ENCODE measurements at regions of chr3 and their contacts with region 1.

Region 1: GRCh38 chr3:188974856-188975599 is 196.7 kb upstream of the TPRG1 start:
- DNase-seq: peak in 4 of 5 donors; percentile 1 to 77 (median 38)
- H3K4me3 ChIP-seq: no peak overlapping the region
- H3K4me3 Mint-ChIP-seq: peak overlapping the region; percentile 1 to 86 (median 67)
- H3K27ac ChIP-seq: peak overlapping the region; percentile 51
- H3K27ac Mint-ChIP-seq: peak overlapping the region; percentile 30 to 96 (median 90)
- H3K4me1 ChIP-seq: peaks cover 8% of the 10 kb centered on the region
- H3K4me1 Mint-ChIP-seq: peaks cover 22 to 45% (median 43%) of the 10 kb centered on the region in 3 donors
- H3K27me3 ChIP-seq: no peaks in the 10 kb centered on the region
- H3K27me3 Mint-ChIP-seq: peaks cover 0 to 2% of the 10 kb centered on the region in 2 donors

Region 2: GRCh38 chr3:188780193-188781147 is 194.6 kb before region 1 on chr3:
- CTCF ChIA-PET with region 1: no interaction called
- POLR2A ChIA-PET with region 1: no interaction called
- DNase-seq: no peak
- H3K4me3 ChIP-seq: no peak overlapping the region
- H3K4me3 Mint-ChIP-seq: no peak overlapping the region
- H3K27ac ChIP-seq: no peak overlapping the region
- H3K27ac Mint-ChIP-seq: no peak overlapping the region
- H3K4me1 ChIP-seq: no peaks in the 10 kb centered on the region
- H3K4me1 Mint-ChIP-seq: peaks cover 0 to 8% (median 5%) of the 10 kb centered on the region in 3 donors
- H3K27me3 ChIP-seq: no peaks in the 10 kb centered on the region
- H3K27me3 Mint-ChIP-seq: no peaks in the 10 kb centered on the region

Region 3: DNA sequence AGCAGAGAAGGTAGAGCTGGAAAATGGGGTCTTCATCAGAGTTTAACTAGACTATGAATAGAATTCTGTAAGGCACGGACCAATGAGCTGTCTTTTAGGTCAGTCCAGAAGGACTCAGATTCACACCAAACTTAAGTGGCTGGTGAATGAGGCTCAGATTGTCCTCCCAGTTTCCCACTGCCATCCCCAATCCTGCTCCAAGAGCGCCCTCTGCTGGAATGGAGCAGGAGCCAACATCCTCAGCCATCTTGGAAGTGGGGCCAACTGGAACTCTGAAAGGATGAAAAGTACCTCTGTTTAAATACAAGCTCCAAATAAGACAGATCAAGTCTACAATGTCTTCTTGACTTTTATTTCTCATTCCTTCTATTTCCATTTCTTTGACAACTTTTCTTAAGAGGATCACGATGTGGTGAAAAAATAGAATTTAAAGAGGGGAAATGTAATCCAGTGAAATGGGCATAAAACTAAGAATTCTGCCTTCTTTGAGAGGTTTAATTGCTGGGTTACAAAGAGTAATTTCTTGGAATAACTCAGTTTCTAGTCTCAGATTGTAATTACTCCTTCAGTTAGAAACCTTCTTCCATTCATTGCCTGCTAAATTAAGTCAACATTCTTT is 20.3 kb before region 1 on chr3:
- CTCF ChIA-PET with region 1: interaction called, 24 read pairs
- POLR2A ChIA-PET with region 1: no interaction called
- DNase-seq: peak; percentile 54 to 77 (median 56)
- H3K4me3 ChIP-seq: no peak overlapping the region
- H3K4me3 Mint-ChIP-seq: no peak overlapping the region
- H3K27ac ChIP-seq: no peak overlapping the region
- H3K27ac Mint-ChIP-seq: peak overlapping the region in 1 of 8 donors; percentile 42
- H3K4me1 ChIP-seq: no peaks in the 10 kb centered on the region
- H3K4me1 Mint-ChIP-seq: no peaks in the 10 kb centered on the region
- H3K27me3 ChIP-seq: no peaks in the 10 kb centered on the region
- H3K27me3 Mint-ChIP-seq: no peaks in the 10 kb centered on the region

Measured in CD8-positive, alpha-beta memory T cell (primary cell).